ENCODE measurements at regions of chr20 and their contacts with region 1.

Region 1: DNA sequence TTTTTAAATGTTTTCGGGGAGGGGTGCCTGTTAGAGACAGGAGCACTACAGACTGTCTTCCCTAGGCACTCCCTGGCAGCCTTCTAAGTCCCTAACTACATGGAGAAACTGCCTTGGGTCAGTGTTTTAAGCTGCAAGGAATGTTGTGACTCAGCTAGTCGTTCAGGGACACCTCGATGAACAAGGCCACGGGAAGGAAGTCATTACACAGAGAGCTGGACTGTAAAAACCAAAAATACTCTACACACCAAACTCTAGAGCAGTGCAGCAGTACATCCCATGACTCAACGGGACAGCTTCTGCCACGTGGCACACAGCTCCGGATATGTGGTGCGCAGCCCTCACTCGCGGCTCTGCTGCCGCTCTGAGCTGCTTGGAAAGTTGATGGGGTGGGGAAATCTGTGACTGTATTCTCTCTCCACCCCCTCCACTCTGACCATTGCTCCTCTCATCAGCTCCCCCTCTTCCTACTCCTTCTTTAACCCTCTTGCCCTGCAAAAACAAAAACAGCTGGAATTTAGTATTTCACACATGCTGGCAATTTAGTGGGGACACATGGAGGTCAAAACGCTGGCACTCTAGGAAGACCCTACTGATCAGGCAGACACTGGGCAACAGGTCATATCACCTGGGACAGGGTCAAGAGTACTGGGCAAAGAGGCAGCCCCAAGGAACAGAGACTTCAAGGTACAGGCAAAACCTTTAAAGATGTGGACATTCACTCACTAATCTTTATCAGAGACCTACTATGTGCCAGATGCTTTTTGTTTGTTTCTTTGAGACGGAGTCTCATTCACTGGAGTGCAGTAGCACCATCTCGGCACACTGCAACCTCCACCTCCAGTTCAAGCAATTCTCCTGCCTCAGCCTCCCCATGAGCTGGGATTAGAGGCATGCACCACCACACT is 10.9 kb upstream of the LPIN3 start:
- DNase-seq: peak; percentile 99
- ATAC-seq: peak; percentile 92
- H3K4me3 ChIP-seq: no peak overlapping the region
- H3K27ac ChIP-seq: peak overlapping the region; percentile 91
- H3K4me1 ChIP-seq: peaks cover 21% of the 10 kb centered on the region
- H3K27me3 ChIP-seq: no peaks in the 10 kb centered on the region
- CTCF ChIP-seq: no peak
- POLR2A ChIP-seq: peak; percentile 72; the same call in 1 of the 2 replicates
- RAD21 ChIP-seq: peak; percentile 37; the same call in 1 of the 2 replicates

Region 2: GRCh38 chr20:41136680-41137613 is 192.7 kb before region 1 on chr20 and contains the start of gene PLCG1:
- CTCF ChIA-PET with region 1: no interaction called
- POLR2A ChIA-PET with region 1: no interaction called
- dilution Hi-C with region 1: no loop called
- in situ Hi-C with region 1: no loop called
- intact Hi-C with region 1: loop called (anchors 5 kb)
- DNase-seq: peak; percentile 67
- ATAC-seq: peak; percentile 84
- H3K4me3 ChIP-seq: peak within 1 kb of the TSS; percentile 98
- H3K27ac ChIP-seq: peak within 1 kb of the TSS; percentile 94
- H3K4me1 ChIP-seq: peaks cover 22% of the 10 kb centered on the region
- H3K27me3 ChIP-seq: no peaks in the 10 kb centered on the region
- CTCF ChIP-seq: no peak
- POLR2A ChIP-seq: peak; percentile 62
- RAD21 ChIP-seq: no peak
- total RNA-seq, gene PLCG1: 54.7 and 59.1 TPM in 2 replicates

Region 3: GRCh38 chr20:41538810-41539596 is 209.3 kb after region 1 on chr20:
- CTCF ChIA-PET with region 1: no interaction called
- POLR2A ChIA-PET with region 1: no interaction called
- dilution Hi-C with region 1: no loop called
- in situ Hi-C with region 1: no loop called
- intact Hi-C with region 1: no loop called
- DNase-seq: no peak
- ATAC-seq: no peak
- H3K4me3 ChIP-seq: no peak overlapping the region
- H3K27ac ChIP-seq: no peak overlapping the region
- H3K4me1 ChIP-seq: peaks cover 2% of the 10 kb centered on the region; the same call in 1 of the 2 replicates
- H3K27me3 ChIP-seq: no peaks in the 10 kb centered on the region
- CTCF ChIP-seq: no peak
- POLR2A ChIP-seq: no peak
- RAD21 ChIP-seq: no peak

Region 4: DNA sequence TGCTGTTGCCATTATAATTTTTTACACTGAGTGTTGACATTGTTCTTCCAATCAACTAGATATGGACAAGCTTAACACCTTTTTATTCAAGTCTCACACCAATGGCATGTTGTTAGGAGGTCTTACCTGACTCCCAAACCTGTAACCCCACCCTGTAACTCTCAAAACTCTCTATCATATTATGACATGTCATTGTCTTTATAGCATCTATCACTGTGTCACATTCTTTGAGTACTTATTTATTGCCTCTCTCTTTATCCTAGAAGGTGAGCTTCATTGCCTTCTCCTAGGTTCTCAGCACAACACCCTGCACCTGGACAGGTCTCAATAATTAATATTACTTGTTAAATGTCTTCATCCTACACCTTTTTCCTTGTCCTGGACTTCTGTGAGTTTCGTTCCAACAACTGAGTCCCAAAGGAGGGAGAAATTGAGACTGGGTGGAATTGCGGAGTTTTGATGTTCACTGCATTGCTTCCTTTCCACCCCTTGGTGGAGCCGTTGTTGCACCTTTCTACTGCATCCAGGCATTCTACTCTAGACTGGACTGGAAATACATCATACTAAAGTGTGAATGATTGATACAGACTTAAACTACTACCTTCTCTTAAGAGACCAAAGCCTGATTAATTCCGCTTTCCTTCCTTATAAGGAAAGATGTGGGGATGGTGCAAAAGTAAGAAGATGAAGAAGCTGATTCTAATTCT is 626.5 kb after region 1 on chr20:
- CTCF ChIA-PET with region 1: no interaction called
- POLR2A ChIA-PET with region 1: no interaction called
- dilution Hi-C with region 1: no loop called
- in situ Hi-C with region 1: no loop called
- intact Hi-C with region 1: no loop called
- DNase-seq: no peak
- ATAC-seq: no peak
- H3K4me3 ChIP-seq: no peak overlapping the region
- H3K27ac ChIP-seq: no peak overlapping the region
- H3K4me1 ChIP-seq: no peaks in the 10 kb centered on the region
- H3K27me3 ChIP-seq: no peaks in the 10 kb centered on the region
- CTCF ChIP-seq: peak; percentile 38
- POLR2A ChIP-seq: no peak
- RAD21 ChIP-seq: peak; percentile 40

Measured in IMR-90 (cell line).